Keratinocyte (primary cell): ENCODE measurements at regions of chr2 and their contacts with region 1.

Region 1: DNA sequence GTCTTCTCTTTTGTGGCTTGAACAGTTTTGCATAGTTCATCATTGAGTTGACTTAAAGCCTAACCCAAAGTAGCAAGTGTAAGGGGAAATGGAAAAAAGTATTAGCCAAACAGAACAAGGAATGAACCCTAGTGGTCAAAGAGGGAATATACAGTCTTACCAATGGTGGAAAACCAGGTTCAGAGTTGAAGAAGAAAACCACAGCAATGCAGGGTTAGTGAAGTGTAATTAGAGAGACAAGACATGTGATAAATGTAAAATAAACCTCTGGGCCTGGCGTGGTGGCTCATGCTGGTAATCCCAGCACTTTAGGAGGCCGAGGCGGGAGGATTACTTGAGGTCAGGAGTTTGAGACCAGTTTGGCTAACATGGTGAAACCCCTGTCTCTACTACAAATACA is 2.4 kb downstream of the TTN start:
- DNase-seq: no peak
- H3K4me3 ChIP-seq: no peak overlapping the region
- H3K27ac ChIP-seq: no peak overlapping the region
- H3K4me1 ChIP-seq: no peaks in the 10 kb centered on the region
- H3K27me3 ChIP-seq: no peaks in the 10 kb centered on the region
- CTCF ChIP-seq: peak in 2 of 3 experiments; percentile 60 to 69

Region 2: DNA sequence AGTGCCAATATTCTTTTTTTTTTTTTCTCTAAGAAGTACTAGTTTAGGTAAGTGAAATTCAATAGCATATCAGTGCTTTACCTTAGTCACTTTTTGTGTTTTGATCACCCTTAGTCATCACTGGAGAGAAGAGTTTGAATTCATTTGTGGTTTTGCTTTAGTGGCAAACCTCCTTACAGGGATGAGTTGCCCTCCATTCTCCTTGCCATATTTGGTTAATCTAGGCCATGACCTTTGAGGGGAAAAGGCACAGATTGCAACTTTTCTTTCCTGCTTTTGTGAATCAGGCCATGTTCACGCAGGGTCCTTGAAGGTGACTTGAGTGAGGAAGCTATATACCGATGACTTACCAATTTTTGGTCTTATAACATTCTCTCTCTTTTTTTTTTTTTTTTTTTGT is 290.1 kb before region 1 on chr2:
- dilution Hi-C with region 1: no loop called
- DNase-seq: no peak
- H3K4me3 ChIP-seq: no peak overlapping the region
- H3K27ac ChIP-seq: no peak overlapping the region
- H3K4me1 ChIP-seq: peaks cover 11% of the 10 kb centered on the region
- H3K27me3 ChIP-seq: no peaks in the 10 kb centered on the region
- CTCF ChIP-seq: no peak

Region 3: GRCh38 chr2:178776751-178777150 is 28.0 kb before region 1 on chr2:
- dilution Hi-C with region 1: no loop called
- DNase-seq: no peak
- H3K4me3 ChIP-seq: no peak overlapping the region
- H3K27ac ChIP-seq: no peak overlapping the region
- H3K4me1 ChIP-seq: no peaks in the 10 kb centered on the region
- H3K27me3 ChIP-seq: no peaks in the 10 kb centered on the region
- CTCF ChIP-seq: no peak

Region 4: GRCh38 chr2:178914259-178914849 is 109.6 kb after region 1 on chr2:
- dilution Hi-C with region 1: loop called (anchors 25 kb)
- DNase-seq: peak; percentile 44
- H3K4me3 ChIP-seq: no peak overlapping the region
- H3K27ac ChIP-seq: no peak overlapping the region
- H3K4me1 ChIP-seq: peaks cover 5% of the 10 kb centered on the region
- H3K27me3 ChIP-seq: peaks cover 4% of the 10 kb centered on the region
- CTCF ChIP-seq: peak; percentile 75 to 95 (median 90)